Mammary epithelial cell (primary cell): ENCODE measurements at regions of chr12 and their contacts with region 1.

Region 1: DNA sequence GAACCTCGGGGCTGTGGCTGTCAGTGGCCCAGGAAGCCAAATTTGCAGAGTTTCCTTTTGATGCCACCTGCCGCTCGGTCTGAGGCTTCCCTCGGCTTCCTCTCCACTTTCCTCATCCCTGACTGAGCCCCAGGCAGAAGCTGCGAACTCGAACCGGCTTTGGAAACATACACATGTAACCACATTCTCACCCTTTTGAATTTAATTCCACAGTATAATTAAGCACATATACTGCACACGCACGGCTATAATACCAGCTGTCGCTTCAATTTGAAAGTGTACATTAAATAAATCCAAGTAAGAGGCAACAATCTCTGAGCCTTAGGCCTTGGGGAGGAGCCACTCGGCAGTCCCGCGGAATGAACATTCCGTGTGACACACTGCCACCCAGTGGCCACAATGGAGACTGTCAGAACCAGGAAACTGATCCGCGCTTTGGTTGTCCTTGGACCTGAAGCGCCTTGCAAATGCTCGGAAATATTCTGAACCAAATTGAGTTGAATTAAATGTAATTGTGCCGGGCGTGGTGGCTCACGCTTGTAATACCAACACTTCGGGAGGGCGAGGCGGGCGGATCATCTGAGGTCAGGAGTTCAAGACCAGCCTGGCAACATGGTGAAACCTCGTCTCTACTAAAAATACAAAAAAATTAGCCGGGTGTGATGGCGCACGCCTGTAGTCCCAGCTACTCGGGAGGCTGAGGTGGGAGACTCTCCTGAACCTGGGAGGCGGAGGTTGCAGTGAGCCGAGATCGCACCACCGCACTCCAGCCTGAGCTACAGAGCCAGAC is 117.9 kb upstream of the TMPO start:
- DNase-seq: peak; percentile 64
- H3K4me3 ChIP-seq: peak overlapping the region; percentile 36 to 45 (median 39)
- H3K27ac ChIP-seq: no peak overlapping the region
- H3K4me1 ChIP-seq: peaks cover 17% of the 10 kb centered on the region
- H3K27me3 ChIP-seq: no peaks in the 10 kb centered on the region
- CTCF ChIP-seq: peak; percentile 80 to 81

Region 2: DNA sequence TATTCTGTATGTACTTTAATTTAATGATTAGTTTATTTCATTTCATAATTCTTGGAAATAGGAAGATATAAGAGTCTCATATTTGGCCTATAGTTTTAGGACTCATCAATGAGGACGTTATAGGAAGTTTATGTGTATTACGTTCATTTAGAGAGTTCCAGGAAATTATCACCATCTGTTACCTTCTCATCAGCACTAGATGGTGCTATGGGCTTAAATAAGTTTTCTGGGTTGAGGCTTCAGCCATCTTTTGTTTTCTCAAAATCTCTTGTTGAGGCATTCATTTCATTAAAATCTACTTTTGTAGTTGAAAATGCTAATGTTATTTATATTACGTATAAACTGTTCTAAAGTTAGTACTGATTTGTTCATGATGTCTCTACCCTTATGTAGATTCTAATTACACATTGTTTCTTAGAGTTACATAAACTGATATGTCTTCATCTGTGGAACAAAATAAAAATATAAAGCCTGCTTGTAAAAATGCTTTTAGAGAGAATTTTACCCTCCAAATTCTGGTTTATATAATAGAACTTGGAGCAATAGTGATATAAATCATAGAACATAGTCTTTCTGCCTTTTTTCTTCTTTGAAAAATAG is 1818.9 kb before region 1 on chr12:
- CTCF ChIA-PET with region 1: no interaction called
- dilution Hi-C with region 1: no loop called
- in situ Hi-C with region 1: no loop called
- intact Hi-C with region 1: loop called (anchors 2 kb)
- DNase-seq: peak; percentile 33
- H3K4me3 ChIP-seq: no peak overlapping the region
- H3K27ac ChIP-seq: no peak overlapping the region
- H3K4me1 ChIP-seq: no peaks in the 10 kb centered on the region
- H3K27me3 ChIP-seq: no peaks in the 10 kb centered on the region
- CTCF ChIP-seq: peak; percentile 64 to 67

Region 3: DNA sequence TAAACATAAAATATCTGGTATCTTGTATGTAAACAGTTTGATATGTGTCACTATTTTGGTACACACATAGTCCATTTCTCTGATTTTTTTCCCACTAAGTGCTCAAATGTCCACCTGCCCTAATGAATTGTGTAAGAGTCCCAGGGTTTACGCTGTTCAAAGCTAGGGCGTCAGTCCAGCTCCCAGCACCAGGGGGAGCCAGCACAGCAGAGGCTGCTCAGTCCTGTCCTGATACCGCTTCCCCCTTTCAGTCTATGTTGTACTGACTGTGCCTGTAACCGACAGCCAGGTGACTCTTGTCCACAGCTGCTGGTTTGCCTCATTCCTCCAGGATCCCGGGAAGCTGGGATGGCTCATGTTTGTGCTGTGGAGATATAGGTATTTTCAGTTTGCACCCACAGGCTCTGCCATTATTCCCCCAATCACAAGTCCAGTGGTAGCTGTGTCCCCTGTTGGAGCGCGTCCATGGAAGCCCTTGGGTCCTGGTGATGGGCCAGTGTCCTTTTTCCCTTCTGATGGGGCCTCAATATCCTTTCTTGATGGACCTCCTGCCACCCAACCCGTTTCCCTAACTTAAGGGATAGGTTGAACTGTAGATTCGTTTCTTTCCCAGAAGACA is 1248.5 kb before region 1 on chr12:
- CTCF ChIA-PET with region 1: no interaction called
- dilution Hi-C with region 1: no loop called
- in situ Hi-C with region 1: loop called in 1 of 2 experiments (anchors 25 kb)
- intact Hi-C with region 1: no loop called
- DNase-seq: peak; percentile 26
- H3K4me3 ChIP-seq: no peak overlapping the region
- H3K27ac ChIP-seq: no peak overlapping the region
- H3K4me1 ChIP-seq: no peaks in the 10 kb centered on the region
- H3K27me3 ChIP-seq: no peaks in the 10 kb centered on the region
- CTCF ChIP-seq: peak; percentile 86 to 92

Region 4: DNA sequence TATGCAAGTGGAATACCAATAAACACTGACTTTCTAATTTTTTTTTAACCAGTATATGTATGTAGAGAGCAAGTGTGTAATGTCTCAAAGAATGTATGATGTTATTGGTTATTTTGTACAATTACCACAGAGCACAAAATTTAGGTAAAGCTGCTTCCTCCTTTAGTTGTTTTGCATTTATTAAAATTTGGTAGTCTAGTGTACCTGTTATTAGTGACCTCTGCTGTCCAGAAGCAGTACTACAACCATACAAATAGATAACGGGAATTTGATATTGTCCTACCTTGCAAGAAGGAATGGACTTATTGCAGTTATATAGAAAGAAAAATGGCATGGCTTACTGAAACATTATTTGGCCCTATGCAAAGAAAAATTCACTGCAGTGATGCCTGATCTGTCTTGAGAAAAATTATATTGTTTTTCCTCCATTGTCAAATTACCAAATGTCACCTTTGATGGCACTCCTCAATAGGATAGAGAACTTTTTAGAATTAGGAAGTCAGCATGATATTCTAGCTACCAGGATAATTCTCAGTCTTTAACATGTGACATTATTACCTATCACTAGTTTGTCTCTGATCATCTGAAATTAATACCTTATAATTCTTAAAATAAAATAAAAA is 1088.8 kb before region 1 on chr12:
- CTCF ChIA-PET with region 1: no interaction called
- dilution Hi-C with region 1: no loop called
- in situ Hi-C with region 1: no loop called
- intact Hi-C with region 1: loop called (anchors 10 kb)
- DNase-seq: peak; percentile 26
- H3K4me3 ChIP-seq: no peak overlapping the region
- H3K27ac ChIP-seq: no peak overlapping the region
- H3K4me1 ChIP-seq: no peaks in the 10 kb centered on the region
- H3K27me3 ChIP-seq: no peaks in the 10 kb centered on the region
- CTCF ChIP-seq: peak; percentile 68

Region 5: DNA sequence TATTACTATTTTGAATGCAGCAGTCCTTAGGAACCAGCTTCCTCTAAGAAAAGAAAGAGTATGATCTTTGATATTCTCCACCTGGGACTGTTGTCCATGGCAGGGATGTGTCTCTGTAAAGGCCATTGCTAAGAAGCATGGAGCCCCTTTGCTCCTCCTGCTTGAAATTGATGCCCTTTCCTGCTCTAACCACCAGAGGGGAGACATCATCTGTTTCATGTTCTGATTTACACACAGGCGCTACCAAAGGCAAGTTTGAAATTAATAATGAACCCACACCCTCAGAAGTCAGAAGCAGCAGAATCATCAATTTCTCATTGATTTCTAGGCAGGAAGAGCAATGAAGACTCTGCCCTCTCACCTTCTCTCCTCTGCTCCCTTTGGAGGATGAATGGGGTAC is 681.2 kb before region 1 on chr12:
- CTCF ChIA-PET with region 1: no interaction called
- dilution Hi-C with region 1: no loop called
- in situ Hi-C with region 1: no loop called
- intact Hi-C with region 1: loop called (anchors 5 kb)
- DNase-seq: peak; percentile 19
- H3K4me3 ChIP-seq: no peak overlapping the region
- H3K27ac ChIP-seq: no peak overlapping the region
- H3K4me1 ChIP-seq: no peaks in the 10 kb centered on the region
- H3K27me3 ChIP-seq: no peaks in the 10 kb centered on the region
- CTCF ChIP-seq: peak; percentile 42 to 61

Region 6: GRCh38 chr12:98227162-98227561 is 170.3 kb before region 1 on chr12:
- CTCF ChIA-PET with region 1: no interaction called
- dilution Hi-C with region 1: no loop called
- in situ Hi-C with region 1: no loop called
- intact Hi-C with region 1: loop called (anchors 5 kb)
- DNase-seq: no peak
- H3K4me3 ChIP-seq: no peak overlapping the region
- H3K27ac ChIP-seq: no peak overlapping the region
- H3K4me1 ChIP-seq: no peaks in the 10 kb centered on the region
- H3K27me3 ChIP-seq: peaks cover 2% of the 10 kb centered on the region
- CTCF ChIP-seq: peak; percentile 48 to 68